Posterior vena cava (tissue), 2 donors: ENCODE measurements at regions of chr1 and their contacts with region 1.

Region 1: DNA sequence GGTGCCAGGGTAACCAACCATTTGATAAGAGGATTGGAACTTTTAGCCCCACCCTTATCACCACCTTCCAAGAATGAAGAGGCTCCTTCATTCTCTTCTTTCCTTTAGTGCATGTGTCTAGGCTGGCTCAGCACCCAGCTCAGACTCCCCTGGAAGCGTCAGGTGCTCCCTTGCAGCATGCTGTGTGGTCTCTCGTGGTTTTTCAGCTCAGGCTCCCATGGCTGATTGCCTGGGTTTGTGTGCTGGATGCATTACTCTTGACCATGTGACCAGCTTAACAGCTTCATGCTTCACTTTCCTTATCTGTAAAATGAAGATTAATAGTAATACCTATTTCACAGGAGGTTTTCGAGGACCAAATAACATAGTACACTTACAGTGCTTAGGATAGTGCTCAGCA is 198.4 kb downstream of the HHAT start:
- DNase-seq: no peak

Region 2: GRCh38 chr1:210584439-210585113 is 57.5 kb after region 1 on chr1:
- intact Hi-C with region 1: no loop called
- DNase-seq: peak; percentile 87

Region 3: DNA sequence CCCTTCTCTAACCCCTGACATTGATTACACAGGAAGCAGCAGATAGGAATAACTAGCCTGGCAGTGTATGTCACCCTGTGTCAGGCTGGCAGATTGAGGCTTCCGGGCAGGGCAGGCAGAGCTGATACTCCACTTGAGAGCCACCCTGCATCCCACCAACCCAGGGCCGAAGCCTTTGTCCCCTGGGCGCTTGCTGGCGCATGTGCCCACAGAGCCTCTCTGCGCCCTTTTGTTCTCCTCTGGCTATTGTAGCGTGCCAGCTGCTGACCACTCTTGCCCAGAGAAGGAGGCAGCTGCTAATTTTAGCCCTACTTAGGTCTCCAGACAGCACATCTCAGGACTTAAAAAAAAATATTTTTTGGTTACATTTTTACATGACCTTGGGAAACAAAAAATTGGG is 106.5 kb after region 1 on chr1:
- intact Hi-C with region 1: loop called in 1 of 2 experiments (anchors 10 kb)
- DNase-seq: no peak

Region 4: GRCh38 chr1:210815641-210816550 is 288.8 kb after region 1 on chr1:
- intact Hi-C with region 1: no loop called
- DNase-seq: no peak

Region 5: GRCh38 chr1:211734791-211735190 is 1207.7 kb after region 1 on chr1:
- intact Hi-C with region 1: loop called in 1 of 2 experiments (anchors 5 kb)
- DNase-seq: no peak